Stomach (tissue), 19 donors: ENCODE measurements at regions of chr5 and their contacts with region 1.

Region 1: GRCh38 chr5:76544268-76544926 is 78.8 kb downstream of the F2RL2 start:
- DNase-seq: peak; percentile 76 to 90
- H3K4me3 ChIP-seq: no peak overlapping the region
- H3K27ac ChIP-seq: peak overlapping the region; percentile 66 to 83 (median 75)
- H3K4me1 ChIP-seq: peaks cover 35 to 85% (median 64%) of the 10 kb centered on the region in 4 donors
- H3K27me3 ChIP-seq: no peaks in the 10 kb centered on the region
- CTCF ChIP-seq: peak in 5 of 7 experiments; percentile 37 to 84 (median 63)
- EP300 ChIP-seq: no peak
- POLR2A ChIP-seq: no peak

Region 2: DNA sequence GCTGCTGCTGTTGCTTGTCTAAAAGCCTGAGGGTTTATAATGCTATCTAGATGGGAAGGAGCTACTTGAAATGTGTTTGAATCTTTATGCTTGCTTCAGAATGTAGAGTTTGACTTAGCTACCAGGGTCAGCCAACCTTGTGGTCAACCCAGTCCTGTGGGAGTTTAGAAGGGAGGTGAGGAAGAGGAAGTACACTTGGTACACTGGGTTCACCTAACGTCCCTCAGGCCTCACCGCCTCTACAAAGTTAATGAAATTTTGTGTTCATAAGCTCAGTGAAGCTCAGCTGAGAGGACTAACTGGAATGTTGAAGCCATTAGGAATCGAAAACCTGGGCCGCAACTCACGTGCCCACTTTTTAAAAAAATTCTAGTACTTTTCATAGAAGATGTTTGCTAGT is 130.7 kb before region 1 on chr5:
- intact Hi-C with region 1: loop called (anchors 10 kb)
- DNase-seq: no peak
- H3K4me3 ChIP-seq: no peak overlapping the region
- H3K27ac ChIP-seq: no peak overlapping the region
- H3K4me1 ChIP-seq: peaks cover 7 to 40% (median 18%) of the 10 kb centered on the region in 4 donors
- H3K27me3 ChIP-seq: no peaks in the 10 kb centered on the region
- CTCF ChIP-seq: no peak
- EP300 ChIP-seq: no peak
- POLR2A ChIP-seq: no peak